Aorta (tissue), 5 donors: ENCODE measurements at regions of chr22 and their contacts with region 1.

Region 1: GRCh38 chr22:23402275-23403151 is 177.6 kb downstream of the IGLL1 start:
- DNase-seq: peak; percentile 55 to 82
- ATAC-seq: peak; percentile 36
- H3K4me3 ChIP-seq: peak overlapping the region in 1 of 2 donors; percentile 3
- H3K27ac ChIP-seq: no peak overlapping the region
- H3K4me1 ChIP-seq: no peaks in the 10 kb centered on the region
- H3K27me3 ChIP-seq: no peaks in the 10 kb centered on the region

Region 2: GRCh38 chr22:23539135-23539838 is 136.8 kb after region 1 on chr22:
- intact Hi-C with region 1: loop called in 1 of 2 experiments (anchors 10 kb)
- DNase-seq: peak; percentile 82 to 88
- ATAC-seq: peak; percentile 97
- H3K4me3 ChIP-seq: no peak overlapping the region
- H3K27ac ChIP-seq: no peak overlapping the region
- H3K4me1 ChIP-seq: no peaks in the 10 kb centered on the region
- H3K27me3 ChIP-seq: no peaks in the 10 kb centered on the region